Adrenal gland (tissue), 19 donors: ENCODE measurements at regions of chr10 and their contacts with region 1.

Region 1: GRCh38 chr10:100878291-100878910 is 34.4 kb upstream of the SLF2 start:
- DNase-seq: peak; percentile 60 to 85 (median 76)
- H3K4me3 ChIP-seq: no peak overlapping the region
- H3K27ac ChIP-seq: no peak overlapping the region
- H3K4me1 ChIP-seq: peaks cover 0 to 35% of the 10 kb centered on the region in 2 donors
- H3K27me3 ChIP-seq: no peaks in the 10 kb centered on the region
- CTCF ChIP-seq: peak; percentile 31 to 85 (median 77)
- POLR2A ChIP-seq: no peak

Region 2: DNA sequence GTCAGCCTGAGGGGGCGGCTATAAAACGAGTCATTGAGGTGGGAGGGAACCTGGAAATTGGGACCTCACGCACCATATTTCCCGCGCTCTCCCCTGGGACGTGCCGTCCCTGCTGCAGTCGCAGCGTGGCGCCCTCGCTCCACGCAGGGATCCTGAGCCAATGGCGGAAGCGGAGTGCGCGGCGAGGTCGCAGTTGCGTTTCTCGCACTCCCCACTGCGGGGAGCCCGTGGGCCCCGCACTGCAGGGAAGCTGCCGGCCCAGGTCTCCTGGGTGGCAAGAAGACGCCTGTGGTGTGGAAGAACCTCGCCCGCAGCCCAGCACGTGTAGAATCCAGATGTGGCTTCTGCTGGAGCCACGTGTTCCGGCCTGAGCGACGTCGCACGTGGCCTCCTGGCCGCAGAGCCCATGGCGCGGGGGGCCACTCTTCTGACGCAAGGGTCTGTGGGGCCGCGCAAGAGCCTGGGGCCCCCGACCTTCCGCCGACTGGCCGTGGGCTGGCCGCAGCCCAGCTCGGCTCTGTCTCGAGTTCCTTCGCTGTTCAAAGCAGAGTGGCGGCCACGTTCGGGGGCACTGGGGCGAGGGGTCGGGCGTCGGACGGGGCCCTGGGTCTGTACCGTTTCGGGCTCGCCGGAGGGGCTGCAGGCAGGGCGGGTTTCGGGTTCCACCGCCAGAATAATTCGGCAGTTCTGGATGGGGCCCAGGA is 316.2 kb before region 1 on chr10:
- intact Hi-C with region 1: loop called (anchors 2 to 10 kb)
- DNase-seq: peak; percentile 75 to 85 (median 78)
- H3K4me3 ChIP-seq: no peak overlapping the region
- H3K27ac ChIP-seq: no peak overlapping the region
- H3K4me1 ChIP-seq: peaks cover 5 to 6% of the 10 kb centered on the region in 2 donors
- H3K27me3 ChIP-seq: peaks cover 18% of the 10 kb centered on the region
- CTCF ChIP-seq: peak; percentile 88 to 99 (median 95)
- POLR2A ChIP-seq: no peak

Region 3: DNA sequence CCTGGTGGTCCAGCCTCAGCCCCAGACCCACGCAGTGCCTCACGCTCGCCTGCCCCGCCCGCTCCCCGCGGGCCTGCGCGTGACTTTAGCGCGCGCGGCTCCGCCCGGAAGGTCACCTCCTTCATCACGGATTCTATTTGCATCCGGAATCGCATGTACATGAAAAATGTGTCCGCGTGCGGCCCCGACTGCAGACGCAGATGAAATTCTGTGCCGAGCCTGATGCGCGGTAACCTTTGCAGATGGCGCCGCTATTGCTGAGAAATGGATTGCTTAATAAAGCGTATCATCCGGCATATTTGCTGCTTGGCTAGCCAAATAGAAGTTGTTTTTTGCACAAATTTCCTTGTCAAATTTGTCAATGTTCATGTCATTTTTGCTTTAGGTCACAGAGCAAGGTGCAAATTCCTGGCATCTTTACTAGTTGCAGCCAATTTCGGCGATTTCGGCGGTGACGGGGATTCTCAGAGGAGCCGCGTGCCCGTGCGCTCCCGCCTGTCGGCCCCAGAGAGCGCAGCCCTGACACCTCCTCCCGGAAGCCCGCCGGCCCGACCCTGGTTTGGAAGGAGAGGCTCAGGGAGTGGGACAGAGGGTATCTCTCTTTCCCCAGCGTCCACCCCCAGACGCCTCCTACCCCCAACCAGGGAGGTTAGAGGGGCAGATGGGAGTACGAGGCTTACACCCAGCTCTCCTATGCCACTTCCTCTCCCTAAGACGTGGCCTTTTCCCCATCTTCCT is 218.9 kb before region 1 on chr10:
- intact Hi-C with region 1: loop called in 1 of 2 experiments (anchors 10 kb)
- DNase-seq: peak in 1 of 7 donors; percentile 33
- H3K4me3 ChIP-seq: no peak overlapping the region
- H3K27ac ChIP-seq: no peak overlapping the region
- H3K4me1 ChIP-seq: peaks cover 16 to 22% of the 10 kb centered on the region in 2 donors
- H3K27me3 ChIP-seq: peaks cover 74% of the 10 kb centered on the region
- CTCF ChIP-seq: no peak
- POLR2A ChIP-seq: no peak

Region 4: DNA sequence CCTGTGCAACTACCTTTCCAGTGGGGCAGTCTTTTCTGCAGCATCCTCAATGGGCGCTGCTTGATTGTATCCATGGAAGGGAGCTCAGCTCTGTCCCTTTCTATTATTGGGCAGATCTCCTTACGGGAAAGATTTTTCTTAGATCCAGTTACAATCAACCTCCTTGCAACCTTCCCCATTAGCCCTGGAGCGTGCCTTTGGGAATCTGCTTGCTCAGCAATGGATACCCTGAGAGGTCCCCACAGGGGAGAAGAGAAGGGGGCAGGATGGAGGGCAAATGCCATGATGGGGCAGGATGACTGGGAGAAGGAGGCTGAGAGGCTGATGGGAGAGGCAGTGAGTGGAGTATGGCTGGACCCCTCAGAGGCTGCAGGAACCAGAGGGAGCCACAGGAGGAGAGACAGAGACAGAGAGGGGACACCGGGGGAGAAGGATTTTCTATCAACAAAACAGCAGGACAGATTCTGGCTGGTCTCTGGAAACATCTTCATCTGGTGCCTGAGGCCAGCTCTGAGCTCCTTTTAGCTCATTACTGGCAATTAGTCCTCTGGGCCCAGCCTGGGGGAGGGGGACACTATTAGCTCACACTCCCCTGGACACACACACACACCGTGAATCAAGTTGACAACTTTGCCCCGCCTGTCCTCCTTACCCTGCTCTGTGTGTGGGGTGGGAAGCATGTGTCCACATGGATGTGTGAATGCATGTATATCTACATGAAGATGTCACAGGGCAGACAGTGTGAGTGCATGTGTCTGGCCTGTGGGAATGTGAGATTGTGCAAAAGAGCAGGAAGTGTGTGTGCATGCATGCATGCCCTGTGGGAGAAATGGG is 213.9 kb before region 1 on chr10:
- intact Hi-C with region 1: loop called (anchors 5 to 10 kb)
- DNase-seq: no peak
- H3K4me3 ChIP-seq: no peak overlapping the region
- H3K27ac ChIP-seq: no peak overlapping the region
- H3K4me1 ChIP-seq: no peaks in the 10 kb centered on the region
- H3K27me3 ChIP-seq: peaks cover 30% of the 10 kb centered on the region
- CTCF ChIP-seq: no peak
- POLR2A ChIP-seq: no peak

Region 5: DNA sequence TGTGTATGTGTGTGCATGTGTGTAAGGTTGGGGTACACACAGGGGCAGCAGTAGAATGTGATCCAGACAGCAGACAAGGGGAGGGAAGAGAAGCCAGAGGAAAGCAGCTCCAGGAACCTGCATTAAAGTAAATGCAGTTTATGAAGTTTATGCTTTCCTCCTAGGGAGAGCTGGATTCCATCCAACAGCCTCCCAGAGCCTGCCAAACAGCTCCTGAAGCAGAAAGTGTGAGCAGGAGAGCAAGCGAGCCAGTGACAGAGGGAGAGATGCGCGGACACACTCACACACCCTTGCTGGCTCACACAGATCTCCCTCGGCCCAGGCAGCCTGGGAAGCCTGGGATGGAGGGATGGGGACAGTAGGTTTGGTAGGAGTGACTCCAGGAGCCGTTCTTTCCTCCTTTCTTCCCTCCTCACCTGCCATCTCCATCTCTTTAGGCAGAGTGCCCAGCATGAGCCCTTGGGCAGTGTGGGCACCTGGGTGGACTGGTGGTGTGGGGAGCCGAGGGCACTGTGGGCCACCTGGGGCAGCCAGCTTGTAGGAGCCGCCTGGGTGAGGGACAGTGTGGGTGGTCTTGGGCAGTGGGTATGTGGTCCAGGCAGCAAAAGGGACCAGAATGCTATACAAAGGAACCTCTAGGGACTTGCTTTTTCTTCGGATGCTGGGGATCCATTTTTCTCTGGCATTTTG is 86.9 kb before region 1 on chr10:
- intact Hi-C with region 1: no loop called
- DNase-seq: no peak
- H3K4me3 ChIP-seq: no peak overlapping the region
- H3K27ac ChIP-seq: no peak overlapping the region
- H3K4me1 ChIP-seq: no peaks in the 10 kb centered on the region
- H3K27me3 ChIP-seq: no peaks in the 10 kb centered on the region
- CTCF ChIP-seq: no peak
- POLR2A ChIP-seq: no peak